ENCODE measurements at regions of chr10 and their contacts with region 1.

Region 1: DNA sequence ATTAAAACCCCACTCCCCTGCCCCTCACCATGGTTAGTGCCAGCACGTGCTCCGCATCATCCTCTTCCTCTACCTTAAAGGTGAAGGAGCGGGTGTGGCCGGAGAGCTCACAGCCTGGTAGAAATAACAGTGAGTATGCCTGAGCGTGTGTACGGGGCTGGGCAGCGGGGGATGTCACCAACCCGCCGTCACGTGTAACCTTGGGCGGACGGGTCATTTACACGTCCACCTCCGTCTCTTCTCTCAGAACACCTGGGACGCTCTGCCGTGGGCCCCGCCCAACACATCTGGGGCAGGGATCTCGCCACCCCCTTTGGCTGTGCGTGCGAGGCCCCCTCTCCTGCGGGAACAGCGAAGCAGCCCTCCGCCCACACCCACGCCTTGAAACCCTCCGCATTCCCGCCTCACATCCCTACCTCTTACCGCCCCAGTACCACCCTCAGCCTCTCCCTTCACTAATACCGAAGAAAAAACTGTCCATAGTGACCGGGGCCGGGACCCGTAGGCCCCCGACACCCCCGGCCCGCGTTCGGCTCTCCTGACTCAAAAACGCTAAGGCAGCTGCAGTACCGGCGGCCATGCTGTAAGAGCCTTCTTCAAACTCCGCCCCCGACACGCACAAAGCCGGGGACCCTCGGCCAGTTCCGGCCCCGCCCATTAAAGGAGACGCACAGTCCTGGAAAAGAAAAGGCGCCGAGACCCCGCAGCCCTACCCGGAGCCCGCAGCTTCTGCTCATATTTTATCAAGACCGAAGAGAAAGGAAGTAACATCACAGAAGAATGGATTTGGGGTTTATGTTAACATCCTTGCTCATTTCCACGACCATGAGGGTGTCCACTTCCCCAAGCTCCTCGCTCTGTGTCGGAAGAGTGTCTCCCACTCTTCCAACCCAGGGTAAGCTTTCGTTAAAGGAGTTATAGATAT is at the start of gene NPM3:
- DNase-seq: peak; percentile 92
- H3K4me3 Mint-ChIP-seq: peak within 1 kb of the TSS; percentile 98
- H3K27ac Mint-ChIP-seq: peak within 1 kb of the TSS; percentile 83
- H3K4me1 Mint-ChIP-seq: peaks cover 67% of the 10 kb centered on the region
- H3K27me3 Mint-ChIP-seq: peaks cover 10% of the 10 kb centered on the region
- total RNA-seq, gene NPM3: 168 to 172 TPM

Region 2: GRCh38 chr10:101587725-101588653 is 195.1 kb before region 1 on chr10 and contains the starts of genes DPCD and POLL:
- CTCF ChIA-PET with region 1: interaction called, 23 read pairs
- POLR2A ChIA-PET with region 1: interaction called, 3 read pairs
- intact Hi-C with region 1: loop called (anchors 5 kb)
- DNase-seq: peak; percentile 95
- H3K4me3 Mint-ChIP-seq: peak within 1 kb of the TSS; percentile 91
- H3K27ac Mint-ChIP-seq: peak within 1 kb of the TSS; percentile 69
- H3K4me1 Mint-ChIP-seq: peaks cover 21% of the 10 kb centered on the region
- H3K27me3 Mint-ChIP-seq: no peaks in the 10 kb centered on the region
- total RNA-seq, gene DPCD: 13.9 to 14.4 TPM
- total RNA-seq, gene POLL: 29.4 to 30.8 TPM

Region 3: DNA sequence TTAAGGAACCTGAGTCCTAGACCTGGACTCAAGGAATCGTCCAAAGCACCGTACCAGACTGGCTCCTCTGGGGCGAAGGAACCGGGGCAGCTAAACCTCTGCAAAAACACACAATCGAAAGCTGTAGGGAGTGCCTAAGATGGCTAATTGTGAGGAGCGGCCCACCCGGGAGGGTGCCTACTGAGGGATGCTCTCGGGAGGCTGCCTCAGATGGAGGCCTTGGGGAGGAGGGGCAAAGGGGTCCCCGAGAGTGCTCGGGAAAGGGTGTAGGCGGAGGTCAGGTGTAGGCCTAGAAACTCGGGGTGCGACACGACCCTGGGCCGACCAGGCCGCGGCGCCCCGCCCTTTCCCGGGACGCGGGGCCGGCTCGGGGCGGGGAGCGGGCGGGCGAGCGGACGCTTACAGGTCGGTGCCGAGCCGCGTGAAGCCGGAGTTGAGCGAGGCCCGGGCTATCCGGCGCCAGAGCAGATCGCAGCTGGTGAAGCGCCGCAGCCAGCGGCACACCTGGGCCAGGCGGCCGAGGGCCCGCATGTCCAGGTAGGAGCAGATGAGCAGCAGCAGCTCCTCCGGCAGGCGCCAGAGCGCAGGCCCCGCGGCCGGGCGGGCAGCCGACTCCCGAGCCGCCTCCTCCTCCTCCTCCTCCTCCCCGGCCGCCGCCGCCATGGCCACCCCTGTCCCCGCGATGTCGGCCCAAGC is 88.9 kb before region 1 on chr10:
- CTCF ChIA-PET with region 1: interaction called, 12 read pairs
- POLR2A ChIA-PET with region 1: interaction called, 3 read pairs
- intact Hi-C with region 1: loop called (anchors 5 kb)
- DNase-seq: peak; percentile 74
- H3K4me3 Mint-ChIP-seq: peak overlapping the region; percentile 95
- H3K27ac Mint-ChIP-seq: peak overlapping the region; percentile 97
- H3K4me1 Mint-ChIP-seq: peaks cover 36% of the 10 kb centered on the region
- H3K27me3 Mint-ChIP-seq: no peaks in the 10 kb centered on the region

Region 4: GRCh38 chr10:101797403-101798059 is 14.5 kb after region 1 on chr10:
- CTCF ChIA-PET with region 1: interaction called, 53 read pairs
- POLR2A ChIA-PET with region 1: interaction called, 6 read pairs
- intact Hi-C with region 1: no loop called
- DNase-seq: no peak
- H3K4me3 Mint-ChIP-seq: no peak overlapping the region
- H3K27ac Mint-ChIP-seq: no peak overlapping the region
- H3K4me1 Mint-ChIP-seq: peaks cover 16% of the 10 kb centered on the region
- H3K27me3 Mint-ChIP-seq: no peaks in the 10 kb centered on the region

Region 5: DNA sequence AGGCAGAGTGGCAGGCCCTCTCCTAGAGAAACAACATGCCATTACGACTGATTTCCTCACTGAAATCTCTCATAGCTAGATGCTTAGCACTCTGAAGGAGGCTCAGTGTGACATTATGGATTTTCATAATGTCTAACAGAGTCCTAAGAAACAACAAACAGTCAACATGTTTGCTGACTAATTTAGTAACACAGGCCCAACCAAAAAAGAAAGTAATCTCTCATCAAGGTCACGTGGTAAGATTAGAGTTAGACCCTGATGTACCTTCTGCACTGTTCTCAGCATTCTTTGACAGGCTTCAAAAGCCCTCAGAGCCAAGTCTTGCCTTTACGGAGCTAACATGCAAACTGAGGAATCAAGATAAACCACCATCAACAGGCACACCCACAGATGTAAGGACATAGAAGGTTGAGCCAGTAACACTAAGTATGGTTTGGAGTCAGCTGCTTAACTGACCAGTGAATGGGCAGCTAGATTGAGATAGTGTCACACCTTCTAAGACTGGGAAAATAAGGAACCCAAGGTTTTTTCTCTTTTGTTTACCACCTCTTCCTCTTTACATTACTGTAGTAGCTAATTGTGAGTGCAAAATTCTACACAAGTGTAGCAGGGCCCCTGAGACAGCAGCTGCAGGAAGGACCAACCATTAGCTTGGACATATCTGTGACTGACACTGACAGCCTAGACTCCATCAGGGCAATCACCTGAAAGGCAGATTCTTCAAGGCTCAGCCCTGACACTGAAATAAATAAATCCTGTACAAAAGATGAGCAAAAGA is 75.8 kb after region 1 on chr10:
- CTCF ChIA-PET with region 1: no interaction called
- POLR2A ChIA-PET with region 1: no interaction called
- intact Hi-C with region 1: no loop called
- DNase-seq: no peak
- H3K4me3 Mint-ChIP-seq: no peak overlapping the region
- H3K27ac Mint-ChIP-seq: no peak overlapping the region
- H3K4me1 Mint-ChIP-seq: peaks cover 8% of the 10 kb centered on the region
- H3K27me3 Mint-ChIP-seq: no peaks in the 10 kb centered on the region

Region 6: GRCh38 chr10:101938316-101939281 is 155.5 kb after region 1 on chr10:
- CTCF ChIA-PET with region 1: no interaction called
- POLR2A ChIA-PET with region 1: no interaction called
- intact Hi-C with region 1: no loop called
- DNase-seq: no peak
- H3K4me3 Mint-ChIP-seq: no peak overlapping the region
- H3K27ac Mint-ChIP-seq: no peak overlapping the region
- H3K4me1 Mint-ChIP-seq: no peaks in the 10 kb centered on the region
- H3K27me3 Mint-ChIP-seq: no peaks in the 10 kb centered on the region